Right ventricle myocardium superior (tissue), 1 donor: ENCODE measurements at regions of chr1 and their contacts with region 1.

Region 1: GRCh38 chr1:20696397-20697329 is 21.1 kb downstream of the KIF17 start:
- DNase-seq: peak; percentile 91
- ATAC-seq: peak; percentile 95

Region 2: DNA sequence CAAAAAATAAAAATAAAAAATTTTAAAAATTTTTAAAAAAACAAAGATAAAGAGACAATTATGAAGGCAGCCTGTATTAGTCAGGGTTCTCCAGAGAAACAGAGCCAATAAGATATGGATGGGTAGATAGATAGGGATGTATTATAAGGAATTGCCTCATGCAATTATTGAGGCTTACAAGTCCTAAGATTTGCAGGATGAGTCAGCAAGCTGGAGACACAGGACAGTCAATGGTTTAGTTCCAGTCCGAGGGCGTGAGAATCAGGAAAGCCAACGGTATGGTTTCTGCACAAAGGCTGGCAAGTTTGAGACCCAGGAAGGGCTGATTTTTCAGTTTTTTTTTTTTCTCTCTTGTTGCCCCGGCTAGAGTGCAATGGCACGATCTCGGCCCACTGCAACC is 504.1 kb after region 1 on chr1:
- intact Hi-C with region 1: loop called (anchors 2 kb)
- DNase-seq: no peak
- ATAC-seq: no peak